Mammary epithelial cell (primary cell): ENCODE measurements at regions of chr19 and their contacts with region 1.

Region 1: DNA sequence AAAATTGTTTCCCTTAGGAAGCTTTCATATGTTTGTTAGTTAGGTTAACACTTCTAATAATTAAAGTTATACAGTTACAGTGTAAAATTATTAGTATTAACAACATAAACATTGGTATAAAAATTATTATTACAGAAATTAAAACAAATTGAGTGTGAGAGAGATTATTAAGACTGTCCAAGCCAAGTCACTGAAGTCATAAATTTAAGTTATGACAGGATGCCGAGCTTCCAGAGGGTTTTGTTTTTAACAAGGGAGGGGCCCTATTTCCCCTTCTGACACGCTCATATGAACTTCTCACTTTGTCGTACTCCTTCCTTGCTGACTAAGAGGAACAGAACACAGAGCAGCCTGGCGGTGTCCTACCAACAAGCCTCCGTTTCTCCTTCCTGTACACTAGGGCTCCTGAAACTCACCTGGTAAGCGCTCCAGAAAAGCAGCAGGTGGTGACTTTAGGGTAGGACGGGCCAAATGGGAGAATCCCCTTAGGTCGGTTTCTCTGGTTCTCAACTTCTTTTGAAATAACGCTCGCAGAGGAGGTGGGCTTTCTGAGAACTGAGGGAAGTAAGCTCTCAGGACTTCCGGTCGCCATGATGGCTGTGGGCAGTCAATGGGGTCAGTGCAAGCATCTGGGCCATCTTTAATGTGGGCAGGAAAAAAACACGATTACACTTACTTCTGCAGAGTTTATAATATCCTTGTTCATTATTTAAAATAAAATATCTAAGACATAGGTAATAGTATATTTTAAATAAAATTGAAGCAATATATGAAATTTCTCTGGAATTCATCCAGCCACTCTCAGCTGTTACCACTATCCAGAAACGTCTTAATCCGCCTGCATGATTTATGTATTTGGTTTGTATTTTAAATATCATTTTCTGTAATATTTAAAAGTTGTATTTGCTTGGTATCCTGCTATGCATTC is at the start of gene CARD8:
- DNase-seq: peak; percentile 86
- H3K4me3 ChIP-seq: peak within 1 kb of the TSS; percentile 56 to 86 (median 77)
- H3K27ac ChIP-seq: peak within 1 kb of the TSS; percentile 97
- H3K4me1 ChIP-seq: peaks cover 4% of the 10 kb centered on the region
- H3K27me3 ChIP-seq: no peaks in the 10 kb centered on the region
- CTCF ChIP-seq: no peak
- total RNA-seq, gene CARD8: 10.5 to 14.2 TPM

Region 2: DNA sequence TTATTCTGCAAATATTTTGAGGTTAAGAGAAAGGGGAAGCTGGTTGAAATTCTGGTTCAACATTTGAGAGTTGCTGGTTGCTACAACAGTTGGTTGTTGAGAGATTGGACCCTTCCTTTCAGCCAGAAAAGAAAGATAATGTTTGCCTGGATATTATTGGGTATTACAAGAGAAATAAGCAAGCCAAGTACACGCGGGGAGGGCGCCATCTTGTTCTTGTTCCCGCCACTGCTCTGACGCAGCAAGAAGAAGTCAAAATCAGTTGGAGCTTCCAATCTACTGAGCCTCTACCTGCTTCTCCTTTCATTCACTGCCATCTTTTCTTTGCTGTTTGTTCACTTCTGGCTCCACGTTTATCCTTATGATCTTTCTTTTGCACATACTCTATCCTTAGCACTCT is 282.1 kb before region 1 on chr19:
- CTCF ChIA-PET with region 1: no interaction called
- dilution Hi-C with region 1: no loop called
- in situ Hi-C with region 1: loop called in 1 of 2 experiments (anchors 25 kb)
- intact Hi-C with region 1: no loop called
- DNase-seq: no peak
- H3K4me3 ChIP-seq: no peak overlapping the region
- H3K27ac ChIP-seq: no peak overlapping the region
- H3K4me1 ChIP-seq: no peaks in the 10 kb centered on the region
- H3K27me3 ChIP-seq: no peaks in the 10 kb centered on the region
- CTCF ChIP-seq: no peak

Region 3: DNA sequence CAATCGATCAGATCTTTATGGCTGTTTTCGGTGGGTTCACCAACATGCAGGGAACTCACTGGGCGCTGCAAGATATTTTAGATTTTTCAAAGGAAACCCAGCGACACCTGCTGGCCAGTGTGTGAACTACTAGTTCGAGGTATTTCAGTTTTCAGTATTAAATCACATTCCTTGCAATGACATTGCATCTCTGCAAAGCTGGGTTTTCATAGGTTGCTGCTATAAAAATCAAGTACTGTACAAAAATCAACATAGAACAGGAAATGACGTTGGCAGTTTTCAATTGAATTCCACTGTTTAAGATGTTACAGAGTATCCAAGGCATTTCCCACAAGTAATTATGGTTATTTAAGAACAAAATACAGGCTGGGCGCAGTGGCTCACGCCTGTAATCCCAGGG is 103.1 kb before region 1 on chr19:
- CTCF ChIA-PET with region 1: no interaction called
- dilution Hi-C with region 1: no loop called
- in situ Hi-C with region 1: no loop called
- intact Hi-C with region 1: loop called (anchors 5 kb)
- DNase-seq: peak; percentile 20
- H3K4me3 ChIP-seq: no peak overlapping the region
- H3K27ac ChIP-seq: no peak overlapping the region
- H3K4me1 ChIP-seq: no peaks in the 10 kb centered on the region
- H3K27me3 ChIP-seq: no peaks in the 10 kb centered on the region
- CTCF ChIP-seq: peak; percentile 68 to 71

Region 4: GRCh38 chr19:48203732-48204628 is 51.7 kb before region 1 on chr19:
- CTCF ChIA-PET with region 1: no interaction called
- dilution Hi-C with region 1: no loop called
- in situ Hi-C with region 1: no loop called
- intact Hi-C with region 1: loop called (anchors 2 kb)
- DNase-seq: peak; percentile 98
- H3K4me3 ChIP-seq: peak overlapping the region; percentile 55 to 76 (median 73)
- H3K27ac ChIP-seq: peak overlapping the region; percentile 86
- H3K4me1 ChIP-seq: peaks cover 14% of the 10 kb centered on the region
- H3K27me3 ChIP-seq: no peaks in the 10 kb centered on the region
- CTCF ChIP-seq: no peak

Region 5: GRCh38 chr19:48363810-48364563 is 108.3 kb after region 1 on chr19 and contains the starts of genes SYNGR4 and TMEM143:
- CTCF ChIA-PET with region 1: no interaction called
- dilution Hi-C with region 1: loop called (anchors 5 kb)
- in situ Hi-C with region 1: no loop called
- intact Hi-C with region 1: no loop called
- DNase-seq: peak; percentile 99
- H3K4me3 ChIP-seq: peak within 1 kb of the TSS; percentile 41 to 58 (median 50)
- H3K27ac ChIP-seq: peak within 1 kb of the TSS; percentile 79
- H3K4me1 ChIP-seq: peaks cover 8% of the 10 kb centered on the region
- H3K27me3 ChIP-seq: no peaks in the 10 kb centered on the region
- CTCF ChIP-seq: no peak
- total RNA-seq, gene SYNGR4: not detected
- total RNA-seq, gene TMEM143: 4.5 to 9.0 TPM